Lower leg skin (tissue), 4 donors: ENCODE measurements at regions of chr5 and their contacts with region 1.

Region 1: GRCh38 chr5:83955916-83956315 is 235.3 kb upstream of the HAPLN1 start:
- DNase-seq: no peak
- H3K4me3 ChIP-seq: no peak overlapping the region
- CTCF ChIP-seq: no peak
- POLR2A ChIP-seq: no peak

Region 2: DNA sequence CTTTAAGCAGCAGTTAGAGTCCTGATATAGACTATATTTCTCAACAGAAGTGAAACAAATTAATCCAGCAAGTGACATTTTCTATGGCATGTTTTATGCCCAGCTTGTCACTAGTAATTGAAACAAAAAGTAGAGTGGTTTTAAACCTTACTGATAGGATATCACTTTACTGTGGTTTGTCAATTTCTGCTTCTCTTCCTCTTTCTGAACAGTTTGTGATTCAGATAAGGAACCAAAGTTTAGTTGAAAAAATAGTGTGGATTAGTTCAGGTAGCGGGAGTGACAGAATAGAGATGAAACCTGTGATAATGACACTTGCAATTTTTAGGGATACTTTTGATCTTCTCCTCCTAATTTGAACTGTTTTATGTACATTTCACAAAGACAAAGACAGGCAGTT is 914.5 kb after region 1 on chr5:
- intact Hi-C with region 1: loop called (anchors 10 kb)
- DNase-seq: no peak
- H3K4me3 ChIP-seq: no peak overlapping the region
- CTCF ChIP-seq: no peak
- POLR2A ChIP-seq: no peak